MCF 10A (cell line): ENCODE measurements at regions of chr11 and their contacts with region 1.

Region 1: DNA sequence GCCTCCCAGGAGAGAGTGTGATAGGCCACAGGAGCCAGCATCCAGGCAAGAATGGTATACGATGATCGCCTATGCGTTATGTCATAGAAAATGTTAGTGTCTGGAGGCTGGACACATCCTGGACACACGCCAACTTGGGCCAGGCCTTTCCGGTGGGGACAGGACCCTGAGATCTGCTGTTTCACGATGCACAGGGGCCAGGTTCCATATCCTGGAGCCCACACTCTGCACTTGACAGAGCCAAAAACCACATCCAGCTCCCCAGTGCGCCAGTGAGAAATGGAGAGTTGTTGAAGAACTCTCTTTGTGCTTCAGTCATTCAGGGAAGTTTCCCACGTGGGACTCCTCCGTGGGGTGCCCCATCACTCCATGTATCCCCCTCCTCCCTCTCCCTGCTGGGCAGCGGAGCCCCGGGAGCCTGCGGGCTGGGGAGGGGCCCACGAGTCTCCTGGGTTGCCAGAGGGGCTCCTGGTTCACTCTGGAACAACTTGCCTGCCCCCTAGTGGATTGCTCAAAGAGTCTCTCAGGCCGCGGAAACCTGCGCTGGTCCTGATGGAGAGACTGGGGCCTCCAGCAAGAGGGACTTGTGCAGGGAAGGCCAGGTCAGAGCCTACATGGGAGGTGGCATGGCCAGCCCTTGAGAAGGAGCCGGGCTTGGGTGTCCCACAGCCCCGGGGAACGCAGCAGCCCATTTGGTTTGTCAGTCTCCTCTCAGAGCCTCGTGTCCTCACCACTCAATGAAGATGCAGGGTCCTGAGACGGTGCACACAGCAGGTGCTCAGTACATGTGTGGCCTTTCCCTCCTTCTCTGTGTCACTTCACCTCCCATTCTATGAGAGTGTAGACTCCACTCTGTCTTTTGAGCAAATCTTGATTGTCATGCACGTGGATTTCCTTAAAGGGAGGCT is 10.2 kb upstream of the LRRC32 start:
- DNase-seq: peak; percentile 80
- H3K4me3 Mint-ChIP-seq: no peak overlapping the region
- H3K27ac Mint-ChIP-seq: no peak overlapping the region
- H3K4me1 Mint-ChIP-seq: no peaks in the 10 kb centered on the region
- H3K27me3 Mint-ChIP-seq: peaks cover 36% of the 10 kb centered on the region
- CTCF ChIP-seq: peak; percentile 70

Region 2: DNA sequence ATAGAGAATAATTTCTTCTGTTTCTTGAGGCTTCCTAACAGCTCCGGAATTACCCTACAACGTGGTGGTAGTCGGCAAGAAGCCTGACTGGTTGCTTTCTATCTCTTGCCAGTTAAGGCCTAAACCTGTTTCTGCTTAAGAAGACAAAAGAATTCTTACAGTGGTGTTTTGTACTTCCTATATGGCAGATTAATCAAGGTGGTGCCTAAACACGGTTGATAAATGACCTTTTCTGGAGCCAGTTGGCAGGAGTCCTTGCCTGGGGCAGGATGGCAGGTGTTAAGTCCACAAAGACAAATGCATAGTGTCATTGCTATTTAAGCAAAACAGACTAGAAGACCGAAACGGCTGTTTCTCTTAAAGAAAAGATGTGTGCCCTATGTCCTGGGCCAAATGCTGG is 289.8 kb before region 1 on chr11:
- CTCF ChIA-PET with region 1: no interaction called
- POLR2A ChIA-PET with region 1: no interaction called
- intact Hi-C with region 1: no loop called
- DNase-seq: no peak
- H3K4me3 Mint-ChIP-seq: no peak overlapping the region
- H3K27ac Mint-ChIP-seq: no peak overlapping the region
- H3K4me1 Mint-ChIP-seq: no peaks in the 10 kb centered on the region
- H3K27me3 Mint-ChIP-seq: no peaks in the 10 kb centered on the region
- CTCF ChIP-seq: no peak

Region 3: GRCh38 chr11:76551400-76551799 is 129.4 kb before region 1 on chr11:
- CTCF ChIA-PET with region 1: interaction called, 5 read pairs
- POLR2A ChIA-PET with region 1: no interaction called
- intact Hi-C with region 1: loop called (anchors 1 kb)
- DNase-seq: peak; percentile 5
- H3K4me3 Mint-ChIP-seq: no peak overlapping the region
- H3K27ac Mint-ChIP-seq: no peak overlapping the region
- H3K4me1 Mint-ChIP-seq: no peaks in the 10 kb centered on the region
- H3K27me3 Mint-ChIP-seq: no peaks in the 10 kb centered on the region
- CTCF ChIP-seq: peak; percentile 27